Caco-2 (cell line): ENCODE measurements at regions of chr4 and their contacts with region 1.

Region 1: GRCh38 chr4:29081234-29081955 is 1638.8 kb upstream of the PCDH7 start:
- DNase-seq: no peak
- H3K4me3 ChIP-seq: no peak overlapping the region
- H3K4me3 Mint-ChIP-seq: no peak overlapping the region
- H3K27ac Mint-ChIP-seq: no peak overlapping the region
- H3K4me1 ChIP-seq: no peaks in the 10 kb centered on the region
- H3K4me1 Mint-ChIP-seq: no peaks in the 10 kb centered on the region
- H3K27me3 ChIP-seq: no peaks in the 10 kb centered on the region
- H3K27me3 Mint-ChIP-seq: no peaks in the 10 kb centered on the region
- CTCF ChIP-seq: no peak

Region 2: DNA sequence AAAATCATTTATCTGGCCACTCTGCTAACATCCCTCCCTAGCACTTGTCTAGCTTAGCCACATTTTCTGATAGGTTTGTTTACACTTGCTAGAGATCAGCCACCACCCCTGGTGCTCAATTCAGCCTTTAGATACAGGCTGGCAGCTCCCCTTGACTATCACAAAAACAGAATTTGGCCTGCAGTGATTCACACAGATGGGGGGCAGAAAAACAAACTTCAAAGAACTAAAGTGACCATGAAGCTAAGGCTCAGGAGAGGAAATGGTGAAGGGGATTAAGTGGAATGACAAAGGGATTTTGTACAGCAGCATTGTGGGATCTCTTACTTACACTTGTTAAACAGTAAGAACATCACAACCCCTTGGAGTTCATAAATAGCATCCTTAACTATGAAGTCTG is 79.2 kb before region 1 on chr4:
- CTCF ChIA-PET with region 1: no interaction called
- POLR2A ChIA-PET with region 1: no interaction called
- intact Hi-C with region 1: no loop called
- DNase-seq: no peak
- H3K4me3 ChIP-seq: no peak overlapping the region
- H3K4me3 Mint-ChIP-seq: no peak overlapping the region
- H3K27ac Mint-ChIP-seq: no peak overlapping the region
- H3K4me1 ChIP-seq: no peaks in the 10 kb centered on the region
- H3K4me1 Mint-ChIP-seq: no peaks in the 10 kb centered on the region
- H3K27me3 ChIP-seq: no peaks in the 10 kb centered on the region
- H3K27me3 Mint-ChIP-seq: no peaks in the 10 kb centered on the region
- CTCF ChIP-seq: no peak

Region 3: GRCh38 chr4:29131304-29131703 is 49.9 kb after region 1 on chr4:
- CTCF ChIA-PET with region 1: no interaction called
- POLR2A ChIA-PET with region 1: no interaction called
- intact Hi-C with region 1: loop called (anchors 2 kb)
- DNase-seq: no peak
- H3K4me3 ChIP-seq: no peak overlapping the region
- H3K4me3 Mint-ChIP-seq: no peak overlapping the region
- H3K27ac Mint-ChIP-seq: no peak overlapping the region
- H3K4me1 ChIP-seq: no peaks in the 10 kb centered on the region
- H3K4me1 Mint-ChIP-seq: no peaks in the 10 kb centered on the region
- H3K27me3 ChIP-seq: no peaks in the 10 kb centered on the region
- H3K27me3 Mint-ChIP-seq: peaks cover 4% of the 10 kb centered on the region
- CTCF ChIP-seq: no peak